ENCODE measurements at regions of chr4 and their contacts with region 1.

Region 1: GRCh38 chr4:83252782-83253405 is 31.7 kb downstream of the COQ2 start:
- DNase-seq: no peak
- ATAC-seq: peak; percentile 83
- H3K4me3 ChIP-seq: no peak overlapping the region
- H3K27ac ChIP-seq: no peak overlapping the region
- H3K4me1 ChIP-seq: peaks cover 13% of the 10 kb centered on the region; the same call in 1 of the 2 replicates
- H3K27me3 ChIP-seq: no peaks in the 10 kb centered on the region
- CTCF ChIP-seq: peak; percentile 82 to 86 (median 84)
- EP300 ChIP-seq: no peak
- POLR2A ChIP-seq: no peak
- RAD21 ChIP-seq: peak; percentile 93

Region 2: DNA sequence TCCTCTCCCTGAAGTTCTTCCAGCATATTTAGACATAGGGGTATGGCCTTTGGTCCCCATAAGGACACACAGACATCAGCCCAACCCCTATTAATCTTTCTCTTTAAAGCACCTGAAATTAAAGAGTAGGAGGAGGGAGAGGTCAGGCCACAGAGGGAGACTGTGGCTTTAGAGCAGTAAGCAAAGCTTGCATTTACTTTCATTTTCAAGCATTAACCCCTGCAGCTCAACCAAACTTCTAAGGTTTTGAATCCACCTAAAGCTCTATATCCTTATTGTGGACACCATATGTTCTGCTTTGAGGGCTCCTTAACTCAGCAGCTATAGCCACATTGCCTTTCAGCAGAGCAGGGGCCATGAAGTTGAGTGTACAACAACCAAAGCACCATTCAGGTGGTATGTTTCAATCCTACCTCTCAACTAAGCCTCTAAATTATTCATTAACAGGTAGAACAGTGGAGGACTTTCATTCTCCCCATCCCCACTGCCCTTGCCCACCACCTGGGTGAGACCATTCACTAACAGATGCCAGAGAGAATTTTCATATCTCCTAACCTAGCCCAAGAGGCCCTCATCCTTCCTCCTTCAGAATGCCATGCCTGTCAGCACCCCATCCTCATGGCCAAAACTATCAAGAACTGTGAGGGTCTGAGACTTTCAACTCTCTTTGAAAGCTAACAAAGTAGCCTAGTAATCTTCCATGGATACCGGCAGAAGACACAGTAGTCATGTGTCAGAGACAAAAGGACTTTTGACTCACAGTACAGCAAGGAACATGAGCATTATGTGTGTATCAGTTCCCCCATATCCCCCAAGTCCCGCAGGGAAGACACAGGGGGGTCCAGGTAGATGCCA is 263.1 kb before region 1 on chr4:
- CTCF ChIA-PET with region 1: no interaction called
- POLR2A ChIA-PET with region 1: no interaction called
- RAD21 ChIA-PET with region 1: no interaction called
- SMC1A ChIA-PET with region 1: no interaction called
- in situ Hi-C with region 1: no loop called
- intact Hi-C with region 1: no loop called
- DNase-seq: peak; percentile 41
- ATAC-seq: peak; percentile 96
- H3K4me3 ChIP-seq: peak overlapping the region; percentile 34; the same call in 1 of the 2 replicates
- H3K27ac ChIP-seq: peak overlapping the region; percentile 35
- H3K4me1 ChIP-seq: peaks cover 5% of the 10 kb centered on the region; the same call in 1 of the 2 replicates
- H3K27me3 ChIP-seq: no peaks in the 10 kb centered on the region
- CTCF ChIP-seq: no peak
- EP300 ChIP-seq: 0 out of 4 replicates have a peak, but pooled peaks of 1 of the 2 experiments have one; percentile 17
- POLR2A ChIP-seq: no peak
- RAD21 ChIP-seq: 0 out of 2 replicates have a peak, but pooled peaks have one; percentile 1

Region 3: DNA sequence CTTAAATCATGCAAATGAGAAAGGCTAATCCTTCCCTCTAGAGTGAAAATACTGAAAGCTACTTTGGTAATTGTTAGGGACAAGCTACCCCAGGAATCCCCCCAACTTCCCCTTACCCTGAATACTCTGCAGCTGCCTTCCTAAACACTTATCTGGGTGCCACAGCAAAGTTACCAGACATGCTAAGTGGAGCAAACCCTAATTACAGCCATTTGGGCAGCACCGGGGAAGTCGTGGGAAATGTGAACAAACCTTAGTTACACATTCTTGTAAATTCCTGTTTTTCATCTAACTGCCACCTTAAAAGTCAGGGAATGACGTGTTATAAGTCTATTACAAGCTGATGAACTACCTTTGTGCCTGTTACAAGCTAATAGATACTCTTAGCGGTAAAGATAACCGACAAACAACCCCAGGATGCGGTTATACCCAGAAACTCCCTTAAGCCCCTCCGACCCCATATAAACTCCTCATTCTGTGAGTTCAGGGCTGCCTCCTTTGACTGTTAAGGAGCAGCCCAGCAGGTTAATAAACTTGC is 72.4 kb before region 1 on chr4:
- CTCF ChIA-PET with region 1: interaction called, 10 read pairs
- POLR2A ChIA-PET with region 1: no interaction called
- RAD21 ChIA-PET with region 1: interaction called, 3 read pairs
- SMC1A ChIA-PET with region 1: interaction called, 18 read pairs
- in situ Hi-C with region 1: no loop called
- intact Hi-C with region 1: loop called (anchors 5 kb)
- DNase-seq: peak; percentile 79
- ATAC-seq: peak; percentile 67
- H3K4me3 ChIP-seq: peak overlapping the region; percentile 33; the same call in 1 of the 2 replicates
- H3K27ac ChIP-seq: peak overlapping the region; percentile 29; the same call in 1 of the 2 replicates
- H3K4me1 ChIP-seq: peaks cover 30% of the 10 kb centered on the region
- H3K27me3 ChIP-seq: no peaks in the 10 kb centered on the region
- CTCF ChIP-seq: no peak
- EP300 ChIP-seq: peak; percentile 9 to 50; a peak in 1 of 4 replicates
- POLR2A ChIP-seq: no peak
- RAD21 ChIP-seq: no peak

Region 4: GRCh38 chr4:83212041-83212851 is 40.6 kb before region 1 on chr4:
- CTCF ChIA-PET with region 1: interaction called, 34 read pairs
- POLR2A ChIA-PET with region 1: interaction called, 21 read pairs
- RAD21 ChIA-PET with region 1: interaction called, 64 read pairs
- SMC1A ChIA-PET with region 1: interaction called, 145 read pairs
- in situ Hi-C with region 1: no loop called
- intact Hi-C with region 1: loop called (anchors 1 kb)
- DNase-seq: peak; percentile 90
- ATAC-seq: peak; percentile 87
- H3K4me3 ChIP-seq: no peak overlapping the region
- H3K27ac ChIP-seq: peak overlapping the region; percentile 60
- H3K4me1 ChIP-seq: peaks cover 29% of the 10 kb centered on the region
- H3K27me3 ChIP-seq: no peaks in the 10 kb centered on the region
- CTCF ChIP-seq: no peak
- EP300 ChIP-seq: peak; percentile 70 to 88; a peak in 3 of 4 replicates
- POLR2A ChIP-seq: no peak
- RAD21 ChIP-seq: no peak

Region 5: DNA sequence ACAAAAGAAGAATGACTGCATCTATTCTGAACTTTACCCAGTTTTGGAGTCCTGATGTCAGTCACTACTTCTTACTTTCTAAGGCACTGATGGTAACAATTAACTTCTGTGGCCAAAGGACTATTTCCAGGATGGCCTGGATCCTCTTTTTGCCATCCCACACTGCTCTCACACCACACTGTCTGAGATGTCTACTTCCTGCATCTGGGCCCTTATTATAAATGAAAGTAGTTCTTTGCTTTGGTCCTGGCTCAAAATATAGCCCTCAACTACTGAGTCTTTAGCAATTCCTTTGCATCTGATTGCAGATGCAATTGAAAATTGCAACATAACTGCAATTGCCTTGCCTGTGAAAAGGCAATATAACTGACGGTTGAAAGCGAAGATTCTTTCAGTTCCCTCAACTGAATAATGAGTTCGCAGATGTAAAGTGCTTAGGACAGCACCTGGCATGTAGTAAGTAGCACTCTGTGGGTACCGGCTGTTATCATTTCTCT is 12.5 kb before region 1 on chr4:
- CTCF ChIA-PET with region 1: interaction called, 38 read pairs
- POLR2A ChIA-PET with region 1: interaction called, 3 read pairs
- RAD21 ChIA-PET with region 1: interaction called, 20 read pairs
- SMC1A ChIA-PET with region 1: interaction called, 38 read pairs
- in situ Hi-C with region 1: no loop called
- intact Hi-C with region 1: loop called (anchors 2 kb)
- DNase-seq: peak; percentile 96
- ATAC-seq: peak; percentile 90
- H3K4me3 ChIP-seq: no peak overlapping the region
- H3K27ac ChIP-seq: peak overlapping the region; percentile 75; the same call in 1 of the 2 replicates
- H3K4me1 ChIP-seq: peaks cover 20% of the 10 kb centered on the region
- H3K27me3 ChIP-seq: no peaks in the 10 kb centered on the region
- CTCF ChIP-seq: no peak
- EP300 ChIP-seq: peak; percentile 76 to 89; a peak in 3 of 4 replicates
- POLR2A ChIP-seq: no peak
- RAD21 ChIP-seq: no peak

Region 6: DNA sequence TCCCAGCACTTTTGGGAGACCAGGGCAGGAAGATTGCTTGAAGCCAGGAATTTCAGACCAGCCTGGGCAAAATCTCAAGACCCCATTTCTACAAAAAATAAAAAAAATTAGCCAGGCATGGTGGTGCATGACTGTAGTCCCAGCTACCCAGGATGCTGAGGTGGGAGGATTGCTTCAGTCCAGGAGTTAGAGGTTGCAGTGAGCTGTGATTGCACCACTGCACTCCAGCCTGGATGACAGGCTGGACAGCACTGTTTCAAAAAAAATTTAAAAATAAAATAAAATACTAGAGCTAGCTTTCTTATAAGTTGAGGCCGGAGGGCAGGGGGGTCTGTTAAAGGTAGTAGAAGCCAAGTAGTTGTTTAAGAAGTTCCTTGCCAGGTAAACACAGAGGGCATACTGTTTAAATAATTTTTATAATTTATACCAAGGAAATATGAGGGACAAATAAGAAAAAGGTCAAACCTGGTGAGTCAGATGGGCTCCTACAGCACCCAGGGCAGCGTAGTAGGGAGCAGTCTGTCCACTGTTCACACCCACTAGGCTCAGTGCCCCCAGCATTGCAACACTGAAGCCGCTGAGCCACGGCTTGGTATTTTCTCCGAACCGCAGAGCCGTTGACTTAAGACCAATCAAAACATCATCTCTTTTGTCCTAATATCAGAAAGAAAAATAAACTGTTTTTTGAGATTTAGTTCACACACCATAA is 14.4 kb after region 1 on chr4:
- CTCF ChIA-PET with region 1: interaction called, 25 read pairs
- POLR2A ChIA-PET with region 1: interaction called, 7 read pairs
- RAD21 ChIA-PET with region 1: interaction called, 7 read pairs
- SMC1A ChIA-PET with region 1: interaction called, 25 read pairs
- in situ Hi-C with region 1: no loop called
- intact Hi-C with region 1: no loop called
- DNase-seq: no peak
- ATAC-seq: no peak
- H3K4me3 ChIP-seq: no peak overlapping the region
- H3K27ac ChIP-seq: peak overlapping the region; percentile 40
- H3K4me1 ChIP-seq: peaks cover 22% of the 10 kb centered on the region
- H3K27me3 ChIP-seq: no peaks in the 10 kb centered on the region
- CTCF ChIP-seq: no peak
- EP300 ChIP-seq: no peak
- POLR2A ChIP-seq: no peak
- RAD21 ChIP-seq: no peak

Region 7: GRCh38 chr4:83276299-83277040 is 23.6 kb after region 1 on chr4:
- CTCF ChIA-PET with region 1: interaction called, 51 read pairs
- POLR2A ChIA-PET with region 1: interaction called, 8 read pairs
- RAD21 ChIA-PET with region 1: interaction called, 32 read pairs
- SMC1A ChIA-PET with region 1: interaction called, 57 read pairs
- in situ Hi-C with region 1: no loop called
- intact Hi-C with region 1: no loop called
- DNase-seq: no peak
- ATAC-seq: peak; percentile 70
- H3K4me3 ChIP-seq: peak overlapping the region; percentile 26; the same call in 1 of the 2 replicates
- H3K27ac ChIP-seq: peak overlapping the region; percentile 78
- H3K4me1 ChIP-seq: peaks cover 44% of the 10 kb centered on the region
- H3K27me3 ChIP-seq: no peaks in the 10 kb centered on the region
- CTCF ChIP-seq: no peak
- EP300 ChIP-seq: peak in 1 of 2 experiments; percentile 70; a peak in 1 of 4 replicates
- POLR2A ChIP-seq: no peak
- RAD21 ChIP-seq: no peak

Region 8: GRCh38 chr4:83340692-83341343 is 87.9 kb after region 1 on chr4:
- CTCF ChIA-PET with region 1: no interaction called
- POLR2A ChIA-PET with region 1: no interaction called
- RAD21 ChIA-PET with region 1: no interaction called
- SMC1A ChIA-PET with region 1: no interaction called
- in situ Hi-C with region 1: no loop called
- intact Hi-C with region 1: no loop called
- DNase-seq: no peak
- ATAC-seq: peak; percentile 56
- H3K4me3 ChIP-seq: no peak overlapping the region
- H3K27ac ChIP-seq: no peak overlapping the region
- H3K4me1 ChIP-seq: peaks cover 4% of the 10 kb centered on the region; the same call in 1 of the 2 replicates
- H3K27me3 ChIP-seq: no peaks in the 10 kb centered on the region
- CTCF ChIP-seq: no peak
- EP300 ChIP-seq: no peak
- POLR2A ChIP-seq: no peak
- RAD21 ChIP-seq: no peak

Measured in GM12878 (cell line).